MCF 10A (cell line): ENCODE measurements at regions of chr2 and their contacts with region 1.

Region 1: GRCh38 chr2:37324786-37325624 is at the start of gene PRKD3:
- DNase-seq: peak; percentile 60
- H3K4me3 Mint-ChIP-seq: peak within 1 kb of the TSS; percentile 88
- H3K27ac Mint-ChIP-seq: peak within 1 kb of the TSS; percentile 81
- H3K4me1 Mint-ChIP-seq: peaks cover 14% of the 10 kb centered on the region
- H3K27me3 Mint-ChIP-seq: no peaks in the 10 kb centered on the region
- CTCF ChIP-seq: peak; percentile 3
- total RNA-seq, gene PRKD3: 22.0 and 23.9 TPM in 2 replicates

Region 2: GRCh38 chr2:36762764-36763490 is 562.1 kb before region 1 on chr2:
- CTCF ChIA-PET with region 1: no interaction called
- POLR2A ChIA-PET with region 1: no interaction called
- intact Hi-C with region 1: no loop called
- DNase-seq: no peak
- H3K4me3 Mint-ChIP-seq: no peak overlapping the region
- H3K27ac Mint-ChIP-seq: no peak overlapping the region
- H3K4me1 Mint-ChIP-seq: no peaks in the 10 kb centered on the region
- H3K27me3 Mint-ChIP-seq: no peaks in the 10 kb centered on the region
- CTCF ChIP-seq: no peak

Region 3: DNA sequence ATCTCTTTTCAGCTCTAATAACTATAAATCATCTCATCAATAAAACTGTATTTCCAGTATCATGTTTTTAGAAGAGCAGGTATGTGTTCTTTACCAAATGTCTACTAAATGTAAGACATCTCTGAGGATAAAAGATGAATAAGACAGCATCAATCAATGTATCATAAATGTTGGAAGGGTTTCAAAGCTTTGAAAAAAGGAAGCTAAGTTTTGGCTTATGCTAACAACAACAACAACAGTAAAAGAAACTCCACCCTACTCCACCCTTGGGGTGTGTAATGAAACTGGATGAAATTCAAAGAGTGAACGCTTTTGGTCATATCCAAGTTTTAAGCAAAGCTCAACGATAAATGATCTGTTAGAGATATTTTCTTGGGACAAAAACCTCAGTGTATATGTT is 17.5 kb before region 1 on chr2:
- CTCF ChIA-PET with region 1: interaction called, 5 read pairs
- POLR2A ChIA-PET with region 1: interaction called, 104 read pairs
- intact Hi-C with region 1: no loop called
- DNase-seq: peak; percentile 31
- H3K4me3 Mint-ChIP-seq: no peak overlapping the region
- H3K27ac Mint-ChIP-seq: no peak overlapping the region
- H3K4me1 Mint-ChIP-seq: peaks cover 25% of the 10 kb centered on the region
- H3K27me3 Mint-ChIP-seq: no peaks in the 10 kb centered on the region
- CTCF ChIP-seq: no peak

Region 4: GRCh38 chr2:37337642-37338310 is 12.8 kb after region 1 on chr2:
- CTCF ChIA-PET with region 1: interaction called, 6 read pairs
- POLR2A ChIA-PET with region 1: interaction called, 53 read pairs
- intact Hi-C with region 1: no loop called
- DNase-seq: no peak
- H3K4me3 Mint-ChIP-seq: no peak overlapping the region
- H3K27ac Mint-ChIP-seq: no peak overlapping the region
- H3K4me1 Mint-ChIP-seq: no peaks in the 10 kb centered on the region
- H3K27me3 Mint-ChIP-seq: no peaks in the 10 kb centered on the region
- CTCF ChIP-seq: no peak

Region 5: DNA sequence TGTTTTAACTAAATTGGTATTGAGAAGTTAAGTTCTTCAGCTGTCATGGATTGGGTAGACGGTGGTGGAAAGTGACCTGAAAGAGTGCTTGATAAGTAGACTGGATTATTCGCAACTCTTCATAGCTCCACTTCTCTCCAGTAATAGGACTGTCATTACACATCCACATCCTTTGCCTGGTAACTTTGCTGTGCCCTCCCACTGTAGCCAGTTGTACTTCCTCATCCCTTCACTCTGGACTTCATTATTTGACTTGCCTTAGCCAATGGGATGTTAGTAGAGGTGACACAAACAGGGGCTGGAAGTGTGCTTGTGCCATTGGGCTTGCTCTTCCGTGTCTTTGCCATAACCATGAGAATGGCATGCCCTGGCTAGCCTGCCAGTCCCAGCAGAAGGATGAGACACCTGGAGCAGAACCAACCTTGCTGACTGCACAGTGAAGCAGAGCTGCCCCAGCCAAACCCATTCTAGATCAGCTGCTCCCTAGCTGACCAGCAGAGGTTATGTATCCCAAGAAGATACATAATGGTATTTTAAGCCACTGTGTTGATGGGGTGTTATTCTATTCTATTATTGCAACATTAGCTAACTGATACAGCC is 36.3 kb after region 1 on chr2:
- CTCF ChIA-PET with region 1: no interaction called
- POLR2A ChIA-PET with region 1: interaction called, 11 read pairs
- intact Hi-C with region 1: no loop called
- DNase-seq: peak; percentile 48
- H3K4me3 Mint-ChIP-seq: no peak overlapping the region
- H3K27ac Mint-ChIP-seq: peak overlapping the region; percentile 20
- H3K4me1 Mint-ChIP-seq: peaks cover 6% of the 10 kb centered on the region
- H3K27me3 Mint-ChIP-seq: no peaks in the 10 kb centered on the region
- CTCF ChIP-seq: no peak

Region 6: GRCh38 chr2:37376421-37377186 is 51.6 kb after region 1 on chr2:
- CTCF ChIA-PET with region 1: interaction called, 4 read pairs
- POLR2A ChIA-PET with region 1: interaction called, 41 read pairs
- intact Hi-C with region 1: loop called (anchors 5 kb)
- DNase-seq: peak; percentile 79
- H3K4me3 Mint-ChIP-seq: peak overlapping the region; percentile 55
- H3K27ac Mint-ChIP-seq: peak overlapping the region; percentile 61
- H3K4me1 Mint-ChIP-seq: peaks cover 27% of the 10 kb centered on the region
- H3K27me3 Mint-ChIP-seq: no peaks in the 10 kb centered on the region
- CTCF ChIP-seq: no peak